ENCODE measurements at regions of chr12 and their contacts with region 1.

Region 1: GRCh38 chr12:47228802-47229201 is 149.0 kb upstream of the AMIGO2 start:
- DNase-seq: no peak
- H3K4me3 Mint-ChIP-seq: no peak overlapping the region
- H3K27ac Mint-ChIP-seq: no peak overlapping the region
- H3K4me1 Mint-ChIP-seq: peaks cover 46% of the 10 kb centered on the region
- H3K27me3 Mint-ChIP-seq: no peaks in the 10 kb centered on the region

Region 2: GRCh38 chr12:45713078-45713477 is 1515.7 kb before region 1 on chr12:
- intact Hi-C with region 1: no loop called
- DNase-seq: no peak
- H3K4me3 Mint-ChIP-seq: no peak overlapping the region
- H3K27ac Mint-ChIP-seq: no peak overlapping the region
- H3K4me1 Mint-ChIP-seq: peaks cover 5% of the 10 kb centered on the region
- H3K27me3 Mint-ChIP-seq: no peaks in the 10 kb centered on the region

Region 3: DNA sequence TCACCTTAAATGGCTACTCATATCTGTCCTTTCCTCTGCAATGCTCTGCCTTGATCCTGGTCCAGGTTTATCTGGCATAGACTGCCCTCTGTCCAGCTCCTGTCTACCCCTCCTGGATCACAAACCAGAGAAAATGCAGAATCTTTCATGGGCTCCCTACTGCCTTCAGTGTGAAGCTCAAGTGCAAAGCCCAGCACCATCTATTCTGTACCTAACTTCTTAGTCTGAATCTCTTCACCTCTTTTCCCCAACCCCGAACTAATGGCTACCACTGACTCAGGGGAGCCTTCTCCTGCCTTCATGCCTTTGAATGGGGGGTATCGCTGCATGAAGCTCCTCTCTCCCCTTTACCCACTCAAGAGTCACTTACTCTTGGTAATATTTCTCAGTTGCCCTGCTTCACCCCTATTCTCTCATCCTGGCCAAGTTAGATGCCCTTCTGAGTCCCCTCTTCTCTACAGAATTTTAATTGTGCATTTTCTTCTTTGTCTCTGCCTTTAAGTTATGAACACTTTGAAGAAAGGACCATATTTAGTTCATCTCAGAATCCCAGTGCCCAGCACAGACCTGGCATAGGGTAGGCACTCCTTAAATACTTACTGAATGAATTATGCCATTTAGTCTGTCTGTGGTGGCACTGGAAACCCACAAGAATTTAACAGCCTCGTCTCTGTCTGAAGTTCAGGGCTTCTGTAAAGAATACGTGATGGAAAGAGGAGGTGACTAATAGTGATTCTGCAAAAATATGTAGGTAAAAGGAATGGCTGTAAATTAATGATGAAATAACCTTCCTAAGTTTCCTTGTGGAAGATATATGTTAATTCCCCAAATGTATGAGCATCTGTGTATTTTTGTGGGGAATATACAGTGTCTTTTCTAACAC is 42.2 kb after region 1 on chr12:
- intact Hi-C with region 1: loop called (anchors 2 kb)
- DNase-seq: no peak
- H3K4me3 Mint-ChIP-seq: peak overlapping the region; percentile 2
- H3K27ac Mint-ChIP-seq: peak overlapping the region; percentile 76
- H3K4me1 Mint-ChIP-seq: peaks cover 71% of the 10 kb centered on the region
- H3K27me3 Mint-ChIP-seq: no peaks in the 10 kb centered on the region

Measured in activated T-helper 1 cell treated with anti-CD3 and anti-CD28 coated beads, Interleukin-12 subunit alpha, Interleukin-12 subunit beta, Interleukin-2, Interleukin-4 antibody, amounts not matched to agents 30 ng/mL and 10 ng/mL and 1 ng/mL, durations not matched to agents 14 hours and 24 hours and 36 hours (primary cell).